ENCODE measurements at regions of chr12 and their contacts with region 1.

Region 1: GRCh38 chr12:12008931-12009611 is 61.7 kb upstream of the BCL2L14 start:
- DNase-seq: peak; percentile 86
- H3K4me3 Mint-ChIP-seq: peak overlapping the region; percentile 76
- H3K27ac Mint-ChIP-seq: peak overlapping the region; percentile 95
- H3K4me1 Mint-ChIP-seq: peaks cover 85% of the 10 kb centered on the region
- H3K27me3 Mint-ChIP-seq: no peaks in the 10 kb centered on the region

Region 2: DNA sequence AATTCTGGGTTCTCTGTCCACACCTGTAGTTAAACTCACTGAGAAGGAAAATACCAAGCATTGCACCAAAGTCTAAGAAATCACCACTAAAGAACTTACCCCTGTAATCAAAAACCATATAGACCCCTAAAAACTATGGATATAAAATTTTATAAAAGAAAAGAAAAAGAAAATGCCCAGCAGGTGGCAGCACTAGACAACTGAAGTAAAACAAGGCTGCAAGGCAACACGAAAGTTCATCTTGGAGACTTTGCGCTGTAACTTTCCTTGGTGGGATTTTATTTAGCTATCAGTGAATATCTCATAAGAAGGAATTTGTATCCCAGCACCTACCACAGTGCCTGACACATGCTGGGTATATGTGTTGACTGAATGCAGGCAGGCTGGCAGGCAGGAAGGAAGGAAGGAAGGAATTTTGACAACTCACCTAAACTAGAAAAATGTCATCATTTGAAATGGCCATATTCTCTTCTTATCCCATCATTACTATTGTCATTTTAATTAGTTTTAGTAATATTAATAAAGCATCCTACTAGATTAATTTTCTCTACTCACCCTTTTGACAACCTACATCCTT is 427.8 kb before region 1 on chr12:
- CTCF ChIA-PET with region 1: interaction called, 11 read pairs
- POLR2A ChIA-PET with region 1: interaction called, 4 read pairs
- intact Hi-C with region 1: loop called (anchors 1 kb)
- DNase-seq: peak; percentile 63
- H3K4me3 Mint-ChIP-seq: no peak overlapping the region
- H3K27ac Mint-ChIP-seq: no peak overlapping the region
- H3K4me1 Mint-ChIP-seq: peaks cover 23% of the 10 kb centered on the region
- H3K27me3 Mint-ChIP-seq: peaks cover 2% of the 10 kb centered on the region

Region 3: GRCh38 chr12:11771356-11771755 is 237.7 kb before region 1 on chr12:
- CTCF ChIA-PET with region 1: interaction called, 4 read pairs
- POLR2A ChIA-PET with region 1: interaction called, 20 read pairs
- intact Hi-C with region 1: loop called (anchors 1 kb)
- DNase-seq: peak; percentile 49
- H3K4me3 Mint-ChIP-seq: no peak overlapping the region
- H3K27ac Mint-ChIP-seq: peak overlapping the region; percentile 88
- H3K4me1 Mint-ChIP-seq: peaks cover 93% of the 10 kb centered on the region
- H3K27me3 Mint-ChIP-seq: no peaks in the 10 kb centered on the region

Region 4: GRCh38 chr12:11836282-11837151 is 172.6 kb before region 1 on chr12:
- CTCF ChIA-PET with region 1: interaction called, 3 read pairs
- POLR2A ChIA-PET with region 1: interaction called, 16 read pairs
- intact Hi-C with region 1: loop called (anchors 1 kb)
- DNase-seq: peak; percentile 88
- H3K4me3 Mint-ChIP-seq: peak overlapping the region; percentile 54
- H3K27ac Mint-ChIP-seq: peak overlapping the region; percentile 98
- H3K4me1 Mint-ChIP-seq: peaks cover 85% of the 10 kb centered on the region
- H3K27me3 Mint-ChIP-seq: no peaks in the 10 kb centered on the region

Region 5: GRCh38 chr12:11981121-11981733 is 27.8 kb before region 1 on chr12:
- CTCF ChIA-PET with region 1: interaction called, 46 read pairs
- POLR2A ChIA-PET with region 1: interaction called, 95 read pairs
- intact Hi-C with region 1: loop called (anchors 1 kb)
- DNase-seq: peak; percentile 78
- H3K4me3 Mint-ChIP-seq: peak overlapping the region; percentile 36
- H3K27ac Mint-ChIP-seq: peak overlapping the region; percentile 99
- H3K4me1 Mint-ChIP-seq: peaks cover 68% of the 10 kb centered on the region
- H3K27me3 Mint-ChIP-seq: no peaks in the 10 kb centered on the region

Region 6: GRCh38 chr12:12449467-12450025 is 440.5 kb after region 1 on chr12:
- CTCF ChIA-PET with region 1: no interaction called
- POLR2A ChIA-PET with region 1: no interaction called
- intact Hi-C with region 1: no loop called
- DNase-seq: no peak
- H3K4me3 Mint-ChIP-seq: no peak overlapping the region
- H3K27ac Mint-ChIP-seq: no peak overlapping the region
- H3K4me1 Mint-ChIP-seq: peaks cover 33% of the 10 kb centered on the region
- H3K27me3 Mint-ChIP-seq: no peaks in the 10 kb centered on the region

Region 7: GRCh38 chr12:12467688-12468261 is 458.7 kb after region 1 on chr12:
- CTCF ChIA-PET with region 1: no interaction called
- POLR2A ChIA-PET with region 1: no interaction called
- intact Hi-C with region 1: loop called (anchors 10 kb)
- DNase-seq: peak; percentile 80
- H3K4me3 Mint-ChIP-seq: peak overlapping the region; percentile 49
- H3K27ac Mint-ChIP-seq: peak overlapping the region; percentile 97
- H3K4me1 Mint-ChIP-seq: peaks cover 84% of the 10 kb centered on the region
- H3K27me3 Mint-ChIP-seq: no peaks in the 10 kb centered on the region

Region 8: DNA sequence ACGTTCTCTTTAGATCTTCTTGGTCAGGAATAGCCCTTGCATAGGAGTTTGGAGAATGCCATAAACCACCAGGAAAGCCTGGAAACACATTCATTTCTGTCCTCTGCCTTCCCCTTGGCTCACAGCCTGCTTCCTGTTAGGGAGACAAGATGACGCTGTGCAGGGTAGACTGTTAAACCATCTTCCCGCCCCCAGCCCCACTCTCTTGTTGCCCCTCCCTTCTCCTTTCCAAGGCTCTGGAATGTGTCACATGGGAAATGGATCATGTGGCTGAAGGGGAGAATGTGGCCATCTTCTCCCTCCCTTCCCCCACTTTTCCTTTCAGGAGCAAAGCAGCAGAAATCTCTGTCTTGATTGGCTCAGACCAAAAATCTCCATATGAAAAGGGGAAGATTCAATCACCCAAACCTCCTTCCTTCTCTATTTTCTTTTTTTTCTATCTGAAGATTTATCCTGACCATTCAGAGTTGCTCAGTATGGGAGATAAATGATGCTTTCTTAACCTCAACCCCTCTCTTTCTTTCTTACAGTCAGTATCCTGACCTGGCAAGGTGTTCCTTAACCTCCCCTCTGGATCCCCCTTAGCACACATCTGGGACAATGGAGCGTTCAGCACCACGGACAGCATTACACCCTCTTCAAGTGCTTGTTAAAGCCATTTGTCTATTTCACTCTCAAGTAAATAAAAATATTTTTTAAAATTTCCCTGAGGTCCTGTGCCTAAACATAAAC is 675.5 kb after region 1 on chr12:
- CTCF ChIA-PET with region 1: no interaction called
- POLR2A ChIA-PET with region 1: no interaction called
- intact Hi-C with region 1: no loop called
- DNase-seq: peak; percentile 31
- H3K4me3 Mint-ChIP-seq: no peak overlapping the region
- H3K27ac Mint-ChIP-seq: no peak overlapping the region
- H3K4me1 Mint-ChIP-seq: peaks cover 4% of the 10 kb centered on the region
- H3K27me3 Mint-ChIP-seq: no peaks in the 10 kb centered on the region

Measured in activated CD4-positive, alpha-beta memory T cell treated with anti-CD3 and anti-CD28 coated beads for 36 hours (primary cell).